ENCODE measurements at regions of chr21 and their contacts with region 1.

Region 1: DNA sequence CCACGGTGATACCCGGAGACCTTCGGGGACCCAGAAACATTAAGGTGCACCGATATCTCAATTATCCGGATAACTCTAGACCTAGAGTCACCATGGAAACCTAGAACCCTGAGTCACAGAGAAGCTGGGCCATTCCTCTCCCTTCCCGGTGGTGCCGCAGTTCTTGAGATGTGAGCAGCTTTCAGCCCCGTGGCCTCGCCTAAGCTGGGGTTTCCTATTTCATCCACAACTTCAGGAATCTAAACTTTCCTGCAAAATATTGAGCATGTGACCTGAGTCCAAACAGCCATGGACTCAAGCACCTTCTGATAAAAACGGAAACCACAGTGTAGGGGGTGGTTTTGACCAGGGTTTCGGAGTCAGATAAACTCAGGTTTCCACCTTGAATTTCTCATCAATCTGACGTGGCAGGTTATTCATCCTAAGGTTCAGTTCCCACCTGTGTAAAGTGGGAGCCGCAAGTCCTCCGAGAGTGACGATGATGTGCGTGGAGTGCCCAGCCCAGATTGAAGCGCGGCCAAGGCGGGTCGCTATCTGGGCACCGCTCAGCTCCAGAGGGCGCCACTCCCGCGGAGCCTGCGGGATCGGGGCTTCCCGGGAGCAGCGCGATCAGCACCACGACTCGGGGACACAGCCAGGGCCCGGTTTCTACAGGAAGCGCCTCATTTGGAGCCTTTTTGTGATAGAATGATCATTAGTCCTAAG is 954 bp upstream of the ETS2 start:
- DNase-seq: peak in 1 of 2 donors; percentile 64
- ATAC-seq: peak; percentile 13 to 31 (median 23)
- H3K4me3 ChIP-seq: peak overlapping the region; percentile 56
- H3K4me3 Mint-ChIP-seq: peak overlapping the region; percentile 94
- H3K27ac ChIP-seq: no peak overlapping the region
- H3K27ac Mint-ChIP-seq: peak overlapping the region in 1 of 2 donors; percentile 72
- H3K4me1 ChIP-seq: peaks cover 14% of the 10 kb centered on the region
- H3K4me1 Mint-ChIP-seq: peaks cover 20 to 29% of the 10 kb centered on the region in 2 donors
- H3K27me3 ChIP-seq: no peaks in the 10 kb centered on the region
- H3K27me3 Mint-ChIP-seq: peaks cover 3 to 43% of the 10 kb centered on the region in 2 donors
- CTCF ChIP-seq: no peak

Region 2: DNA sequence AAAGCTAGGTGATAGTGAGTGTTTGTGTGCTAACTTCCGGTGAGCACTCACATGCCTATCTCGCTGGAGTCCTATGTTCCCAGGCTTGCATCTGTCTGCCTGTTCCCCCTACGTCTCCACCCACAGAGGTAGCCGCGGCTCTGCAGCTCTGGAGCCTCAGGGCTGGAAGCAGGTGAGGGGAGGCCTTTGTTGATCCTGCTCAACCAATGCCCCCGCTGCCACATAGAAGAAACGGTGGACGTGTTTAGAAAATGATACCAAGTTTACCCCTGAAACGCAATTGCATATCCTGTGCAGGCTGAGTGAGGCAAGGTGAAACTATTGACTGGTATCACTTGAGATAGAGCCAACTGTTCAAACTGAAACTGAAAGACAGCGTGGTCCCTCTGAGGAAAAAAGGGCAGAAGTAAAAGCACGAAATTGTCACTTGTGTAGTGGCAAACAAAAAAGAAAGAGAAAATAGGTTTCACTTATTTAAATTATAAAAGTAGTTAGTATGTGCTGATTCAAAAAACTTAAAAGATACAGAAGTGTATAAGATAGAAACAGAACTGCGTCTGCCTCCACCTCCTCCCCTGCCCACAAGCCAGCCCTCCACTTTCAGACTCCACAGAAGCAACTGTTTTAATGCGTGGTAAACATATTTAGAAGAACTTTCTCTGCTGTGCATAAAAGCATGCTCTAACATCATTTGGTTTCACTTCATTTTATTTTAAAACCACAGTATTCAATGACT is 37.6 kb before region 1 on chr21:
- intact Hi-C with region 1: loop called (anchors 5 kb)
- DNase-seq: peak; percentile 28 to 84
- ATAC-seq: peak; percentile 93 to 95 (median 93)
- H3K4me3 ChIP-seq: peak overlapping the region; percentile 57
- H3K4me3 Mint-ChIP-seq: peak overlapping the region; percentile 85
- H3K27ac ChIP-seq: peak overlapping the region; percentile 87
- H3K27ac Mint-ChIP-seq: peak overlapping the region; percentile 76 to 85
- H3K4me1 ChIP-seq: peaks cover 15% of the 10 kb centered on the region
- H3K4me1 Mint-ChIP-seq: peaks cover 11 to 16% of the 10 kb centered on the region in 2 donors
- H3K27me3 ChIP-seq: no peaks in the 10 kb centered on the region
- H3K27me3 Mint-ChIP-seq: peaks cover 0 to 16% of the 10 kb centered on the region in 2 donors
- CTCF ChIP-seq: no peak

Measured in natural killer cell (primary cell).